A549 (cell line): ENCODE measurements at regions of chr9 and their contacts with region 1.

Region 1: GRCh38 chr9:34759432-34760134 is 49.6 kb upstream of the CCL21 start:
- DNase-seq: no peak
- ATAC-seq: peak; percentile 47 to 55; a peak in 3 of 6 replicates
- H3K4me3 ChIP-seq: no peak overlapping the region
- H3K27ac ChIP-seq: no peak overlapping the region
- H3K4me1 ChIP-seq: no peaks in the 10 kb centered on the region
- CTCF ChIP-seq: no peak
- EP300 ChIP-seq: no peak
- POLR2A ChIP-seq: no peak
- RAD21 ChIP-seq: no peak

Region 2: DNA sequence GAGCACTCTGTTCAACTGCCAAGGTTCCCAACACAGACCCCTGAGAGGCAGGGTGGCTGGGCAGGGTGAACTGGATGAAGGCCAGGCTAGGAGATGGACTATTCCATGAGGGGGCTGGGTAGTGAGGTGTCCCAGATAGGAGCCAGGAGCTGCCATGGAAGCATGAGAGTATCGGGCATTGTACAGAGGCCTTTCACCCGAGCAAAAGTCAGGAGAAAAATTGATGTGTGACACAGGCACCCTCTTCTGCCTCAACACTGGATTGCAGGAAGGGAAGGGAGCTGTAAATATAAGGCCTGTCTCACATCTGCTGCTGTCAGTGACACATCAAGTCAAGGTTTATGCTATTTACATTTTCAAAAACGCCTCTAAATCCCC is 506.1 kb before region 1 on chr9:
- CTCF ChIA-PET with region 1: no interaction called
- POLR2A ChIA-PET with region 1: no interaction called
- DNase-seq: peak in 1 of 2 experiments; percentile 54
- ATAC-seq: peak; percentile 32 to 47; a peak in 4 of 6 replicates
- H3K4me3 ChIP-seq: no peak overlapping the region
- H3K27ac ChIP-seq: peak overlapping the region; percentile 73 to 76
- H3K4me1 ChIP-seq: peaks cover 36% of the 10 kb centered on the region
- CTCF ChIP-seq: no peak
- EP300 ChIP-seq: no peak
- POLR2A ChIP-seq: no peak
- RAD21 ChIP-seq: peak in 1 of 2 experiments; percentile 53; a peak in 3 of 5 replicates

Region 3: GRCh38 chr9:34732893-34733292 is 26.7 kb before region 1 on chr9:
- CTCF ChIA-PET with region 1: interaction called, 10 read pairs
- POLR2A ChIA-PET with region 1: no interaction called
- DNase-seq: no peak
- ATAC-seq: no peak
- H3K4me3 ChIP-seq: no peak overlapping the region
- H3K27ac ChIP-seq: no peak overlapping the region
- H3K4me1 ChIP-seq: no peaks in the 10 kb centered on the region
- CTCF ChIP-seq: no peak
- EP300 ChIP-seq: no peak
- POLR2A ChIP-seq: no peak
- RAD21 ChIP-seq: no peak

Region 4: GRCh38 chr9:34744295-34745221 is 15.0 kb before region 1 on chr9:
- CTCF ChIA-PET with region 1: interaction called, 10 read pairs
- POLR2A ChIA-PET with region 1: no interaction called
- DNase-seq: peak in 1 of 2 experiments; percentile 28
- ATAC-seq: peak; percentile 86 to 91
- H3K4me3 ChIP-seq: no peak overlapping the region
- H3K27ac ChIP-seq: no peak overlapping the region
- H3K4me1 ChIP-seq: peaks cover 15% of the 10 kb centered on the region; the same call in 2 of the 3 replicates
- CTCF ChIP-seq: no peak
- EP300 ChIP-seq: no peak
- POLR2A ChIP-seq: no peak
- RAD21 ChIP-seq: no peak

Region 5: DNA sequence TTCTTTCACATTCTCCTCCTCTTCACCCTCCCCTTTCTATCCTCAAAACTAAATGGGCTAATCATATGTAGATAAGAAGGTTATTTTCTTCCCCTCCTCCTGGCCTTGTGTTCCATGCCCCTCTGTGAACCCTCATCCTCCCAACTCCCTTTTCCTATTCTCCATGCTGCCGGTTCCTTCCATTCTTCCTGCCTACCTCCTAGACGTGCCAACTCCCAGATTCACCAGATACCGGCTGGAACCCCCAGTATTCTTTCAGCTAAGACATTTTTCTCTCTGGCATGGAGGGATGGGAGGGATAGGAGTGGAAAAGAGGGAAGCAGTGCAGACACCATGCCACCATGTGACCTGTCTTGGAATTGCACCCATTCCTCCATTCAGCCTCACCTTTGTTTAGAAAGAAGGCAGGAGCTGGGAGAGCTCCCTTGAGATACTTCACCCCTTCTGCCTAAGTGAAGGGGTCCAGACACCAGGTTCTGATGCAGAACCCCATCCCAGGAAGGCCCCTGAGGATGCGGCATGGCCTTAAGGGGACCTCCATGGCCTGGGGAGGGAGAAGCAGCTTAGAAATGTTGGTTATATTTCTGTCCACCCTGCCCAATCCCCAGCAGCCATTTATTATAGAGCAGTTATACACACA is 234.8 kb after region 1 on chr9:
- CTCF ChIA-PET with region 1: interaction called, 29 read pairs
- POLR2A ChIA-PET with region 1: no interaction called
- DNase-seq: peak; percentile 58 to 78
- ATAC-seq: peak; percentile 49 to 64; a peak in 5 of 6 replicates
- H3K4me3 ChIP-seq: no peak overlapping the region
- H3K27ac ChIP-seq: no peak overlapping the region; a peak in 1 of 6 replicates
- H3K4me1 ChIP-seq: peaks cover 39% of the 10 kb centered on the region
- CTCF ChIP-seq: peak; percentile 52
- EP300 ChIP-seq: no peak
- POLR2A ChIP-seq: no peak
- RAD21 ChIP-seq: peak; percentile 47 to 65; a peak in 4 of 5 replicates